GM10248 (cell line): ENCODE measurements at regions of chr5 and their contacts with region 1.

Region 1: GRCh38 chr5:36168737-36169136 is 16.8 kb downstream of the SKP2 start:
- DNase-seq: no peak
- CTCF ChIP-seq: no peak

Region 2: GRCh38 chr5:36151434-36152323 is 17.1 kb before region 1 on chr5 and contains the starts of genes LMBRD2 and SKP2:
- CTCF ChIA-PET with region 1: interaction called, 12 read pairs
- POLR2A ChIA-PET with region 1: no interaction called
- DNase-seq: peak; percentile 97
- CTCF ChIP-seq: no peak